K562 (cell line): ENCODE measurements at regions of chr1 and their contacts with region 1.

Region 1: GRCh38 chr1:45521398-45522323 is at the start of gene PRDX1:
- DNase-seq: peak; percentile 97 to 99 (median 98)
- ATAC-seq: peak; percentile 92
- H3K4me3 ChIP-seq: peak within 1 kb of the TSS; percentile 96
- H3K27ac ChIP-seq: peak within 1 kb of the TSS; percentile 87
- H3K4me1 ChIP-seq: peaks cover 25 to 29% of the 10 kb centered on the region in 2 experiments
- H3K27me3 ChIP-seq: no peaks in the 10 kb centered on the region
- CTCF ChIP-seq: peak in 2 of 3 experiments; percentile 38 to 39; a peak in 4 of 6 replicates
- EP300 ChIP-seq: peak; percentile 66; the same call in 1 of the 2 replicates
- POLR2A ChIP-seq: peak; percentile 100
- RAD21 ChIP-seq: peak; percentile 7 to 18
- polyA plus RNA-seq, gene PRDX1: 2,282 to 2,388 TPM

Region 2: GRCh38 chr1:44619261-44619900 is 902.3 kb before region 1 on chr1:
- CTCF ChIA-PET with region 1: no interaction called
- POLR2A ChIA-PET with region 1: no interaction called
- in situ Hi-C with region 1: no loop called
- intact Hi-C with region 1: no loop called
- DNase-seq: peak in 1 of 4 experiments; percentile 29
- ATAC-seq: no peak
- H3K4me3 ChIP-seq: no peak overlapping the region
- H3K27ac ChIP-seq: no peak overlapping the region
- H3K4me1 ChIP-seq: peaks cover 19 to 28% of the 10 kb centered on the region in 2 experiments
- H3K27me3 ChIP-seq: no peaks in the 10 kb centered on the region
- CTCF ChIP-seq: no peak
- EP300 ChIP-seq: no peak
- POLR2A ChIP-seq: no peak
- RAD21 ChIP-seq: no peak

Region 3: DNA sequence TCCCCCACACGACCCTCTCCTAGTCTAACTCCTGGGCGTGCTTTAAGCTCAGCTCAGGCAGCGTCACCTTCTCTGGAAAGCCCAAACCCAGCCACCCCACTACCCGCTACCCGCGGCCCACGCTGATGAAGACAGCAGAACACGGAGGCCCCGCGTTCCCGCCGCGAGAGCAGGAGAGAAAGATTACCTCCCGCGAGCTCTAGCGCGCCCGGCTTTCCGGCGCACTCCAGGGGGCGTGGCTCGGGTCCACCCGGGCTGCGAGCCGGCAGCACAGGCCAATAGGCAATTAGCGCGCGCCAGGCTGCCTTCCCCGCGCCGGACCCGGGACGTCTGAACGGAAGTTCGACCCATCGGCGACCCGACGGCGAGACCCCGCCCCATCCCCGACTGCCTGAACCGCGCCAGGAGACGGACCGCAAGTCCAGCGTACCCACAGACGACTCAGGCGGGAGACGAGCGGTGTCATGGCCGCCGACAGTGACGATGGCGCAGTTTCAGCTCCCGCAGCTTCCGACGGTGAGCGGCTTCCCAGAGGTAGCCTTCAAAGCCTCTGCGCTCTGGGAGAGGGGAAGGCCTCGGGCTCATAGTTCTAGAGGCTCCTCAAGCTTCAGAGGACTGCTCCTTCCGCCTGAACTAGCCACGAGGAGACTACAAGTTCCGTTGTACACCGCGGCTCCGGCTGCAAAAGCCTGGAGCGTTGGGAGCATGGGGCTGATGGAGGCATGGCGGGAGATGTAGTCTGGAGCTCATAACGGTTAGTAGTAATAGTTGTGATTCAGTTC is 181.7 kb before region 1 on chr1 and contains the starts of genes MUTYH and TOE1:
- CTCF ChIA-PET with region 1: no interaction called
- POLR2A ChIA-PET with region 1: interaction called, 25 read pairs
- in situ Hi-C with region 1: no loop called
- intact Hi-C with region 1: no loop called
- DNase-seq: peak; percentile 98 to 99 (median 98)
- ATAC-seq: peak; percentile 95
- H3K4me3 ChIP-seq: peak within 1 kb of the TSS; percentile 66
- H3K27ac ChIP-seq: peak within 1 kb of the TSS; percentile 94
- H3K4me1 ChIP-seq: peaks cover 6 to 18% of the 10 kb centered on the region in 2 experiments; a peak in 4 of 5 replicates
- H3K27me3 ChIP-seq: no peaks in the 10 kb centered on the region
- CTCF ChIP-seq: no peak
- EP300 ChIP-seq: no peak; the same call in 1 of the 2 replicates
- POLR2A ChIP-seq: peak; percentile 99
- RAD21 ChIP-seq: no peak; a peak in 1 of 4 replicates
- polyA plus RNA-seq, gene MUTYH: 3.4 to 6.2 TPM
- polyA plus RNA-seq, gene TOE1: 59.8 to 85.7 TPM

Region 4: DNA sequence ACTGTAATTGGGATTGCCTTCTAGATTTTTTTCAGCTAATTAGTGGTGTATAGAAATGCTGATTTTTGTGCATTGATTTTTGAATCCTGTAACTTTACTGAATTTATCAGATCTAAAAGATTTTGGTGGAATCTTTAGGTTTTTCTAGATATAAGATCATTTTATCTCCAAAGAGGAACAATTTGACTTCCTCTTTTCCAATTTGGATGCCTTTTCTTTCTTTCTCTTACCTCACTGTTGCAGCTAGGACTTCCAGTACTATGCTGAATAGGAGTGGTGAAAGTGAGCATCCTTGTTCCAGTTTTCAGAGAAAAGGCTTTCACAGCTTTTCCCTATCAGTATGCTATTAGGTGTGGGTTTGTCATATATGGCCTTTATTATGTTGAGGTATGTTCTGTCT is 84.3 kb before region 1 on chr1:
- CTCF ChIA-PET with region 1: no interaction called
- POLR2A ChIA-PET with region 1: no interaction called
- in situ Hi-C with region 1: no loop called
- intact Hi-C with region 1: no loop called
- DNase-seq: no peak
- ATAC-seq: no peak
- H3K4me3 ChIP-seq: no peak overlapping the region
- H3K27ac ChIP-seq: no peak overlapping the region
- H3K4me1 ChIP-seq: no peaks in the 10 kb centered on the region
- H3K27me3 ChIP-seq: no peaks in the 10 kb centered on the region; a peak in 1 of 5 replicates
- CTCF ChIP-seq: no peak
- EP300 ChIP-seq: no peak
- POLR2A ChIP-seq: no peak
- RAD21 ChIP-seq: no peak

Region 5: DNA sequence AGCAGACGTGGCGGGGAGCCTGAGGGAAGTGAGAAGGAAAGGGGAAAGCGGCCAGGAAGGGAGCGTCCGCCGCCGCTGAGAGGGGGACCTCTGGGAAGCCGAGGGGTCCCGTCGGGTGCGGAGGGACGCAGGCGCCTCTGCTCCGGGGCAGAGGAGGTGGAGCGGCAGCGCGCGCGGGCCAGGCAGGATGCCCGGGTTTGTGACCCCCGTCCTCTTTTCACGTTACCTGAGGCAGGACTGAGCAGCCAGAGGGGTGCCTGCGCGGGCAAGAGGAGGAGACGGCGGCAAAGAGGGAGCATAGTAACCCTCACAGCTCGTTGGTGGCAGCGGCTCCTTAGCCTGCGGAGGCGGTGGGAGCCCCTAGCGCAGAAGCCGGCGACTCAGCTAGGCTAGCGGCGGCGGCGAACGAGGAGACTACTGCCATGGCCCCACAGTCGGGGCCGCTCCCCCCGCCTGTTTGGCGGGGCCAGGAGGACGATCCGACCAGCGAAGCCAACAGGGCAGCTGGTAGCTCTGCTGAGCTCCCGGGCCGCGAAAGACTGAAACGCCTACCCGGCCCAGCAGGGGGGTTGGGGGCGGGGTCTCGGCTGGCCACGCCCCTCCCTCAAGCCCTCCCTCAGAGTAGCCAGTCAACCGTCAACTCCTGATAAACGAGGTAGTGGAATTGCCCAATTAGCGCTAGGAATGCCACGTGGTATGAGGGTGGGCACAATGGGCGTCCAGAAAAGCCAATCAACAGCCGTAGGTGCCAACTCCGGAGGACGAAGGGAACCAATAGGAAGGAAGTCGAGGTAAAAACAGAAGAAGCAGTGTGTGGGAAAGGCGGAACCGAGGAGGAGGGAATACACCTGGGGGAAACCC is 30.8 kb before region 1 on chr1 and contains the start of gene TESK2:
- CTCF ChIA-PET with region 1: no interaction called
- POLR2A ChIA-PET with region 1: interaction called, 18 read pairs
- in situ Hi-C with region 1: no loop called
- intact Hi-C with region 1: no loop called
- DNase-seq: peak; percentile 89 to 95 (median 92)
- ATAC-seq: peak; percentile 93
- H3K4me3 ChIP-seq: peak within 1 kb of the TSS; percentile 57
- H3K27ac ChIP-seq: peak within 1 kb of the TSS; percentile 52
- H3K4me1 ChIP-seq: peaks cover 9 to 20% of the 10 kb centered on the region in 2 experiments; a peak in 4 of 5 replicates
- H3K27me3 ChIP-seq: no peaks in the 10 kb centered on the region
- CTCF ChIP-seq: 0 out of 6 replicates have a peak, but pooled peaks of 2 of the 3 experiments have one; percentile 5
- EP300 ChIP-seq: no peak
- POLR2A ChIP-seq: peak; percentile 72
- RAD21 ChIP-seq: 0 out of 4 replicates have a peak, but pooled peaks of 1 of the 2 experiments have one; percentile 7
- polyA plus RNA-seq, gene TESK2: 1.6 to 1.9 TPM

Region 6: GRCh38 chr1:45535988-45536766 is 14.5 kb after region 1 on chr1:
- CTCF ChIA-PET with region 1: no interaction called
- POLR2A ChIA-PET with region 1: interaction called, 135 read pairs
- in situ Hi-C with region 1: no loop called
- intact Hi-C with region 1: no loop called
- DNase-seq: peak in 1 of 4 experiments; percentile 49
- ATAC-seq: peak; percentile 82
- H3K4me3 ChIP-seq: no peak overlapping the region
- H3K27ac ChIP-seq: no peak overlapping the region
- H3K4me1 ChIP-seq: peaks cover 0 to 16% of the 10 kb centered on the region in 2 experiments; a peak in 4 of 5 replicates
- H3K27me3 ChIP-seq: no peaks in the 10 kb centered on the region
- CTCF ChIP-seq: no peak
- EP300 ChIP-seq: no peak
- POLR2A ChIP-seq: no peak
- RAD21 ChIP-seq: no peak

Region 7: GRCh38 chr1:45550401-45551351 is 29.0 kb after region 1 on chr1 and contains the start of gene AKR1A1:
- CTCF ChIA-PET with region 1: interaction called, 4 read pairs
- POLR2A ChIA-PET with region 1: interaction called, 87 read pairs
- in situ Hi-C with region 1: no loop called
- intact Hi-C with region 1: loop called (anchors 1 kb)
- DNase-seq: peak; percentile 90 to 97 (median 92)
- ATAC-seq: peak; percentile 98
- H3K4me3 ChIP-seq: peak within 1 kb of the TSS; percentile 72
- H3K27ac ChIP-seq: peak within 1 kb of the TSS; percentile 92
- H3K4me1 ChIP-seq: peaks cover 10 to 17% of the 10 kb centered on the region in 2 experiments; a peak in 3 of 5 replicates
- H3K27me3 ChIP-seq: no peaks in the 10 kb centered on the region; a peak in 1 of 5 replicates
- CTCF ChIP-seq: peak in 2 of 3 experiments; percentile 4 to 11; a peak in 1 of 6 replicates
- EP300 ChIP-seq: peak; percentile 21; the same call in 1 of the 2 replicates
- POLR2A ChIP-seq: peak; percentile 96
- RAD21 ChIP-seq: peak in 1 of 2 experiments; percentile 15; a peak in 1 of 4 replicates
- polyA plus RNA-seq, gene AKR1A1: 68.6 to 114 TPM

Region 8: GRCh38 chr1:45569962-45570581 is 48.4 kb after region 1 on chr1:
- CTCF ChIA-PET with region 1: interaction called, 5 read pairs
- POLR2A ChIA-PET with region 1: interaction called, 68 read pairs
- in situ Hi-C with region 1: no loop called
- intact Hi-C with region 1: loop called (anchors 1 kb)
- DNase-seq: peak; percentile 67 to 86 (median 74)
- ATAC-seq: peak; percentile 87
- H3K4me3 ChIP-seq: no peak overlapping the region
- H3K27ac ChIP-seq: no peak overlapping the region
- H3K4me1 ChIP-seq: peaks cover 11 to 22% of the 10 kb centered on the region in 2 experiments
- H3K27me3 ChIP-seq: no peaks in the 10 kb centered on the region
- CTCF ChIP-seq: peak; percentile 95 to 99 (median 98)
- EP300 ChIP-seq: 0 out of 2 replicates have a peak, but pooled peaks have one; percentile 8
- POLR2A ChIP-seq: no peak
- RAD21 ChIP-seq: peak; percentile 94 to 97

Region 9: GRCh38 chr1:46036894-46037839 is 515.5 kb after region 1 on chr1:
- CTCF ChIA-PET with region 1: no interaction called
- POLR2A ChIA-PET with region 1: no interaction called
- in situ Hi-C with region 1: no loop called
- intact Hi-C with region 1: no loop called
- DNase-seq: peak; percentile 87 to 92 (median 88)
- ATAC-seq: peak; percentile 95
- H3K4me3 ChIP-seq: no peak overlapping the region
- H3K27ac ChIP-seq: no peak overlapping the region; the same call in 2 of the 3 replicates
- H3K4me1 ChIP-seq: peaks cover 3 to 12% of the 10 kb centered on the region in 2 experiments; a peak in 4 of 5 replicates
- H3K27me3 ChIP-seq: no peaks in the 10 kb centered on the region
- CTCF ChIP-seq: peak; percentile 97 to 99 (median 99)
- EP300 ChIP-seq: no peak
- POLR2A ChIP-seq: peak; percentile 71
- RAD21 ChIP-seq: peak; percentile 100